Naive thymus-derived CD4-positive, alpha-beta T cell (primary cell): ENCODE measurements at regions of chr4 and their contacts with region 1.

Region 1: DNA sequence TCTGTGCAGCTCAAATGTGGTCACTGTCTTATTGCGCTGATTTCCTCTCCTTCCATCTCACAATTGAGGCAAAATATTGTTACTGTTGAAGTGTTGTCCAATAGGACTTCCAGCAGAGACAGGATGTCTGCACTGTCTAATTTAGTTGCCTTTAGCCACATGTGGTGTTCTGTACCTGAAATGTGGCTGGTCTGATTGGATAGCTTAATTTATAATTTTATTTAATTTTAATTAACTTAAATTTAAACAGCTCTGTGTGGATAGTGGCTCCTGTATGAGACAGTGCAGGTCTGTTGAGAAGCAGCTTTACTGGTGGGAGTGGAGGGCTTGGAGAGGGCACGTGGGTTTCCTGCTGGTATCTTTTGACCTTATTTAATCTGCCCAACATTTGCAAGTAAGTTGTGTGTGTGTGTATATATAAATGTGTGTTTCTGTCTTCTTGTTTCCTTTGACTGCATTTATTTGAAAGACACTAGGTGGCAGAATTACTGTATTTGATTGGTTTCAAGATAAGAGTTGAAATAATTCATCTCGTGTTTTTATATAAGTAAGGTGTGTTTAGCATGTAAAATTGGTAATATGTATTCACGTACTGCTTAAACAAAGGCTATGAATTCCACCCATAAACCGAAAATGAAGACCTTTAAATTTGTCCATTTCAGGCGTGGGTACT is 55.3 kb upstream of the MSANTD1 start:
- DNase-seq: peak in 6 of 9 donors; percentile 32 to 57 (median 50)
- ATAC-seq: peak; percentile 42
- H3K4me3 ChIP-seq: no peak overlapping the region
- H3K4me3 Mint-ChIP-seq: peak overlapping the region in 5 of 10 donors; percentile 2 to 62 (median 19)
- H3K27ac ChIP-seq: no peak overlapping the region
- H3K27ac Mint-ChIP-seq: peak overlapping the region in 4 of 9 donors; percentile 2 to 49 (median 16)
- H3K4me1 ChIP-seq: peaks cover 42 to 72% of the 10 kb centered on the region in 2 donors
- H3K4me1 Mint-ChIP-seq: peaks cover 46 to 71% (median 62%) of the 10 kb centered on the region in 7 donors
- H3K27me3 ChIP-seq: no peaks in the 10 kb centered on the region
- H3K27me3 Mint-ChIP-seq: no peaks in the 10 kb centered on the region

Region 2: GRCh38 chr4:3226467-3226866 is 32.8 kb after region 1 on chr4:
- CTCF ChIA-PET with region 1: no interaction called
- POLR2A ChIA-PET with region 1: no interaction called
- intact Hi-C with region 1: no loop called
- DNase-seq: no peak
- ATAC-seq: peak; percentile 68
- H3K4me3 ChIP-seq: no peak overlapping the region
- H3K4me3 Mint-ChIP-seq: no peak overlapping the region
- H3K27ac ChIP-seq: no peak overlapping the region
- H3K27ac Mint-ChIP-seq: peak overlapping the region in 1 of 9 donors; percentile 22
- H3K4me1 ChIP-seq: no peaks in the 10 kb centered on the region
- H3K4me1 Mint-ChIP-seq: peaks cover 0 to 5% (median 0%) of the 10 kb centered on the region in 7 donors
- H3K27me3 ChIP-seq: no peaks in the 10 kb centered on the region
- H3K27me3 Mint-ChIP-seq: no peaks in the 10 kb centered on the region

Region 3: GRCh38 chr4:3241898-3242524 is 48.3 kb after region 1 on chr4:
- CTCF ChIA-PET with region 1: no interaction called
- POLR2A ChIA-PET with region 1: interaction called, 3 read pairs
- intact Hi-C with region 1: loop called (anchors 5 to 10 kb)
- DNase-seq: no peak
- ATAC-seq: no peak
- H3K4me3 ChIP-seq: no peak overlapping the region
- H3K4me3 Mint-ChIP-seq: no peak overlapping the region
- H3K27ac ChIP-seq: no peak overlapping the region
- H3K27ac Mint-ChIP-seq: peak overlapping the region in 3 of 9 donors; percentile 11 to 38 (median 17)
- H3K4me1 ChIP-seq: peaks cover 3 to 4% of the 10 kb centered on the region in 2 donors
- H3K4me1 Mint-ChIP-seq: peaks cover 2 to 18% (median 15%) of the 10 kb centered on the region in 7 donors
- H3K27me3 ChIP-seq: no peaks in the 10 kb centered on the region
- H3K27me3 Mint-ChIP-seq: no peaks in the 10 kb centered on the region

Region 4: GRCh38 chr4:3248811-3249661 is 55.4 kb after region 1 on chr4 and contains the start of gene MSANTD1:
- CTCF ChIA-PET with region 1: no interaction called
- POLR2A ChIA-PET with region 1: no interaction called
- intact Hi-C with region 1: loop called (anchors 5 to 10 kb)
- DNase-seq: no peak
- ATAC-seq: no peak
- H3K4me3 ChIP-seq: no peak within 1 kb of the TSS
- H3K4me3 Mint-ChIP-seq: no peak within 1 kb of the TSS
- H3K27ac ChIP-seq: no peak within 1 kb of the TSS
- H3K27ac Mint-ChIP-seq: peak within 1 kb of the TSS in 1 of 9 donors; percentile 62
- H3K4me1 ChIP-seq: no peaks in the 10 kb centered on the region
- H3K4me1 Mint-ChIP-seq: no peaks in the 10 kb centered on the region
- H3K27me3 ChIP-seq: no peaks in the 10 kb centered on the region
- H3K27me3 Mint-ChIP-seq: no peaks in the 10 kb centered on the region
- total RNA-seq, gene MSANTD1: 1.4 to 2.7 (median 2.3) TPM

Region 5: DNA sequence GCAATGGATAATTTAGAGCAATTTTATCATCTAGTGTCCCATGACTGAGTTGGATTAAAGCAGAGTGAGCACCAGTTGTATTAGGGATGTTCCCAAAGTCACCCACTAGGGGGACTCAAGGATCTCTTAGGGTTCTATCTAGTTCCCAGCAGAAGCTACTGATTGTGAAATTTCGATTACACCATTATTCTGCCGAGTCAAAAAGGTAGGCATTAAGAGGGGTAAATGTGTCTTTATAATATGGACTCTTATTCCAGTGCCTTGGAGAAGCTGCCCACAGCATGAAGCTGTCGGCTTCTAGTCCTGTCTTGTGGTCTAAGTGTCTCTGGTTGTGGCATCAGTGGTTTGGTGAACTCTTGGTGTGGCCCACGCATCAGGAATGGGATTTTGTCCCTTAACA is 152.5 kb after region 1 on chr4:
- CTCF ChIA-PET with region 1: interaction called, 3 read pairs
- POLR2A ChIA-PET with region 1: no interaction called
- intact Hi-C with region 1: loop called in 1 of 2 experiments (anchors 1 kb)
- DNase-seq: peak in 7 of 9 donors; percentile 46 to 72 (median 63)
- ATAC-seq: peak; percentile 92
- H3K4me3 ChIP-seq: no peak overlapping the region
- H3K4me3 Mint-ChIP-seq: peak overlapping the region in 1 of 10 donors; percentile 1
- H3K27ac ChIP-seq: no peak overlapping the region
- H3K27ac Mint-ChIP-seq: peak overlapping the region in 1 of 9 donors; percentile 34
- H3K4me1 ChIP-seq: peaks cover 4 to 13% of the 10 kb centered on the region in 2 donors
- H3K4me1 Mint-ChIP-seq: peaks cover 8 to 40% (median 34%) of the 10 kb centered on the region in 7 donors
- H3K27me3 ChIP-seq: no peaks in the 10 kb centered on the region
- H3K27me3 Mint-ChIP-seq: no peaks in the 10 kb centered on the region

Region 6: DNA sequence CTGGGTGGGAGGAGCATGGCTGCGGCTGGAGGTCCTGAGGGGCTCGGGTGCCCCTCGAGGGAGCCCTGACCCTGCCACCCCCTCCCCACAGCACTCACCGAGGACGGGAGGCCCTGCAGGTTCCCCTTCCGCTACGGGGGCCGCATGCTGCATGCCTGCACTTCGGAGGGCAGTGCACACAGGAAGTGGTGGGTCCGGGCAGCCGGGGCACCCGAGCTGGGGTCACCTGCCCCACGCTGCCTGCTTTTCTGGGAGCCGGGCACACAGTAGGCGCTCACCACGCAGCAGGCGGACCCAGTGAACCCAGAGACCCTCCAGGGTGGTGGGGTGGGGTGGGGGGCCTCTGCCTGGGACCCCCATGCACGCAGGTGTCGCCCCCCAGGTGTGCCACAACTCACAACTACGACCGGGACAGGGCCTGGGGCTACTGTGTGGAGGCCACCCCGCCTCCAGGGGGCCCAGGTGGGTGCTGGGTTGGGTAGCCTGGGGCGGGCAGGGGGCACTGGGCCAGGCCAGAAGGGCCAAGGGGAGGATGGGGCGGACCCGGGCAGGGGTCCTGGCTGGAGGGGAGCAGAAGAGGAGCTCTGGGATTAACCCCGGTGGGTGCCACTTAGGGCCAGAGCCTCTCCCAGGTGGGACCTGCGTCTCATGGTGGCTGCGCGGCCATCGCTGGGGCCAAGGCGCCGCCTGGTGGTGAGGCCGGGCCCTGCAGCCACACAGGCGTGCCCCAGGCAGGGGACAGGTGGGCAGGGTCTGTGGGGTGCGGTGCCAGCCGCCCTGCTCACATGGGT is 249.5 kb after region 1 on chr4:
- CTCF ChIA-PET with region 1: interaction called, 14 read pairs
- POLR2A ChIA-PET with region 1: no interaction called
- intact Hi-C with region 1: loop called (anchors 1 to 2 kb)
- DNase-seq: peak; percentile 40 to 83 (median 69)
- ATAC-seq: peak; percentile 73
- H3K4me3 ChIP-seq: no peak overlapping the region
- H3K4me3 Mint-ChIP-seq: no peak overlapping the region
- H3K27ac ChIP-seq: no peak overlapping the region
- H3K27ac Mint-ChIP-seq: no peak overlapping the region
- H3K4me1 ChIP-seq: peaks cover 0 to 7% of the 10 kb centered on the region in 2 donors
- H3K4me1 Mint-ChIP-seq: no peaks in the 10 kb centered on the region
- H3K27me3 ChIP-seq: no peaks in the 10 kb centered on the region
- H3K27me3 Mint-ChIP-seq: no peaks in the 10 kb centered on the region

Region 7: GRCh38 chr4:3480528-3481112 is 287.0 kb after region 1 on chr4:
- CTCF ChIA-PET with region 1: interaction called, 3 read pairs
- POLR2A ChIA-PET with region 1: interaction called, 3 read pairs
- intact Hi-C with region 1: loop called in 1 of 2 experiments (anchors 1 kb)
- DNase-seq: peak; percentile 39 to 84 (median 70)
- ATAC-seq: peak; percentile 80
- H3K4me3 ChIP-seq: no peak overlapping the region
- H3K4me3 Mint-ChIP-seq: no peak overlapping the region
- H3K27ac ChIP-seq: no peak overlapping the region
- H3K27ac Mint-ChIP-seq: peak overlapping the region in 1 of 9 donors; percentile 2
- H3K4me1 ChIP-seq: no peaks in the 10 kb centered on the region
- H3K4me1 Mint-ChIP-seq: peaks cover 0 to 4% (median 0%) of the 10 kb centered on the region in 7 donors
- H3K27me3 ChIP-seq: no peaks in the 10 kb centered on the region
- H3K27me3 Mint-ChIP-seq: peaks cover 3 to 27% (median 18%) of the 10 kb centered on the region in 5 donors